ENCODE measurements at regions of chr19 and their contacts with region 1.

Region 1: DNA sequence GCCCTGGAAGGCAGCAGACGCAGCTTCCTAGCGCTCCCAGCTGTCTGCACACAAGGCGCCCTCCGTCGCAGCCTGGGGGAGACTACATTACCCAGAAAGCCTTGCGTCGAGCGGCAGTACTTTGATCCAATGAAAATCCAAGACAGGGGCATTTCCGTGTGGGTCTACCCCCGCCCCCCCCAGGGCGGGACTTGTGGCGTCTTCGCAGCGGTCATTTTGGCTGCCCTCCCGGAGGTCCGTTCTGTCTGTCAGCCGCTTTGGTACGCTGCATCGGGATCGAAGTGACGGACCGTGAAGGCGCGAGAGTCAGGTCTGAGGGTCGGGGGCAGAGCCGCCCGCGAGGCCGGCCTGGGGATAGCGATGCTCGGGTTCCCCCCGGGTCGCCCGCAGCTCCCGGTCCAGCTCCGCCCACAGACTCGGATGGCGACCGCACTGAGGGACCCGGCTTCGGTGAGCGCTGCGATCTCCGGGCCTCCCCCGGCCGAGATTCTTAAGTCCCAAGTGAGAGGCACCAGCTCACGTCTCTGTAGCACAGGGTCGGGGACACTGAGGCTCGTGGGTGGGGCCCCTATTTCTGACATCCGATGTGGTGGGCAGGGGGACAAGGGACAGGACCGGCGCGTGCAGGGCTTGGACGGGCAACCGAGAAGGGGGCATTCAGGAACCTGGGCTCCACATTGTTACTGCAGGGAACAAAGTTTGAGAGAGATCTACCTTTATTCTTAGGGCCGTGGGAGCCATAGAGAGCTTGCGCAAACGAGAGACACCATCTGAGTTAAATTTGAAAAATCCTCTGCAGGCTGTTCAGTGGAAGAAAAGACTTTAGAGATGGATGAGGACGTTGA is at the start of gene ZNF211:
- DNase-seq: peak; percentile 93
- ATAC-seq: peak; percentile 99
- H3K4me3 ChIP-seq: peak within 1 kb of the TSS; percentile 67 to 95 (median 84)
- H3K4me3 Mint-ChIP-seq: peak within 1 kb of the TSS; percentile 92
- H3K27ac ChIP-seq: peak within 1 kb of the TSS; percentile 70 to 80
- H3K27ac Mint-ChIP-seq: peak within 1 kb of the TSS; percentile 88
- H3K4me1 ChIP-seq: peaks cover 11 to 17% of the 10 kb centered on the region in 2 donors
- H3K4me1 Mint-ChIP-seq: peaks cover 22% of the 10 kb centered on the region
- H3K27me3 ChIP-seq: no peaks in the 10 kb centered on the region
- H3K27me3 Mint-ChIP-seq: no peaks in the 10 kb centered on the region
- CTCF ChIP-seq: no peak
- total RNA-seq, gene ZNF211: 53.5 and 53.6 TPM in 2 replicates

Region 2: GRCh38 chr19:57537953-57538547 is 95.2 kb before region 1 on chr19:
- CTCF ChIA-PET with region 1: no interaction called
- POLR2A ChIA-PET with region 1: no interaction called
- intact Hi-C with region 1: no loop called
- DNase-seq: no peak
- ATAC-seq: no peak
- H3K4me3 ChIP-seq: peak overlapping the region in 1 of 5 experiments; percentile 21
- H3K4me3 Mint-ChIP-seq: no peak overlapping the region
- H3K27ac ChIP-seq: no peak overlapping the region
- H3K27ac Mint-ChIP-seq: no peak overlapping the region
- H3K4me1 ChIP-seq: no peaks in the 10 kb centered on the region
- H3K4me1 Mint-ChIP-seq: no peaks in the 10 kb centered on the region
- H3K27me3 ChIP-seq: no peaks in the 10 kb centered on the region
- H3K27me3 Mint-ChIP-seq: no peaks in the 10 kb centered on the region
- CTCF ChIP-seq: no peak

Region 3: GRCh38 chr19:57578487-57579205 is 54.6 kb before region 1 on chr19 and contains the start of gene ZNF416:
- CTCF ChIA-PET with region 1: no interaction called
- POLR2A ChIA-PET with region 1: no interaction called
- intact Hi-C with region 1: loop called (anchors 1 kb)
- DNase-seq: peak; percentile 99
- ATAC-seq: peak; percentile 89
- H3K4me3 ChIP-seq: peak within 1 kb of the TSS; percentile 28 to 90 (median 72)
- H3K4me3 Mint-ChIP-seq: peak within 1 kb of the TSS; percentile 86
- H3K27ac ChIP-seq: peak within 1 kb of the TSS; percentile 46 to 79
- H3K27ac Mint-ChIP-seq: peak within 1 kb of the TSS; percentile 94
- H3K4me1 ChIP-seq: peaks cover 19 to 27% of the 10 kb centered on the region in 2 donors
- H3K4me1 Mint-ChIP-seq: peaks cover 25% of the 10 kb centered on the region
- H3K27me3 ChIP-seq: no peaks in the 10 kb centered on the region
- H3K27me3 Mint-ChIP-seq: no peaks in the 10 kb centered on the region
- CTCF ChIP-seq: no peak
- total RNA-seq, gene ZNF416: 13.0 and 13.9 TPM in 2 replicates

Region 4: DNA sequence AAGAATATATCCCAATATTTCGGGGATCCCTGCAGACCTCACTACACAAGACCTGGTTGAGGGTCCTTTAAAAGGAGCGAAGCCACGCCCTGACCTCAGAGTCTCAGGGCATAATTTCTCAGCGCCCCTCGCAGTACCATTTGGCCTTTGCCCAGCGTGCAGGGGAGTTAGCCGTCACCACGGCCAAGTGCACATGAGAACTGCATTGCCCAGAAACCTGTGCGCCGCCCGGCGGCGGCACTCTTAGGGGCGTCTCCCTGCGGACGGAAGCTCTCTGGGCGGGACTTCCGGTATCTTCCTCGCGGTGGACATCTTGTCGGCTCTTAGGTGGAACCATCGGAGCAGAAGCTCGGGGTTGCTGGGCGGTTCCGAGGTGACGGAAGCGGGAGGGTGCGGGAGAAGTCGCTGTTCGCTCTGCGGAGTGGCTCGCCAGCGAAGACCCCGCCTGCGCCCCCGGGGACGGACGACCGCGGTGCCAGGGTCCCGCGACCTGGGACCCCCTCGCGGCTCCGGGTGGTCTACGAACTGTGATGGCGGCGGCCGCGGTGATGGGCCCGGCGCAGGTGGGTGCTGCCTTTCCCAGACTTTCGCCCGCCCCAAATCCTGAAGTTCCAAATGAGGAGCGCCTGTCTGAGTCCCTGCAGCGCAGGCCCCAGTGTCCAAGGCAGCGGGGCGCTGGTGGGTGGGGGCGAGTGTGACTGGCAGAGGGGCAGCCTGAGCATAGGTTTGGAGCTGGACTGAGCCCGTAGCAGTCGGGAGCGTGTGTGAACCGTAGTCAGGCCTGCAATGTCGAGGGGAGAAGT is 19.1 kb before region 1 on chr19 and contains the start of gene ZNF134:
- CTCF ChIA-PET with region 1: no interaction called
- POLR2A ChIA-PET with region 1: interaction called, 5 read pairs
- intact Hi-C with region 1: loop called (anchors 1 kb)
- DNase-seq: peak; percentile 94
- ATAC-seq: peak; percentile 99
- H3K4me3 ChIP-seq: peak within 1 kb of the TSS; percentile 45 to 97 (median 92)
- H3K4me3 Mint-ChIP-seq: peak within 1 kb of the TSS; percentile 93
- H3K27ac ChIP-seq: peak within 1 kb of the TSS; percentile 42 to 81
- H3K27ac Mint-ChIP-seq: peak within 1 kb of the TSS; percentile 90
- H3K4me1 ChIP-seq: peaks cover 14 to 21% of the 10 kb centered on the region in 2 donors
- H3K4me1 Mint-ChIP-seq: peaks cover 40% of the 10 kb centered on the region
- H3K27me3 ChIP-seq: no peaks in the 10 kb centered on the region
- H3K27me3 Mint-ChIP-seq: no peaks in the 10 kb centered on the region
- CTCF ChIP-seq: peak; percentile 34
- total RNA-seq, gene ZNF134: 38.1 and 38.9 TPM in 2 replicates

Region 5: DNA sequence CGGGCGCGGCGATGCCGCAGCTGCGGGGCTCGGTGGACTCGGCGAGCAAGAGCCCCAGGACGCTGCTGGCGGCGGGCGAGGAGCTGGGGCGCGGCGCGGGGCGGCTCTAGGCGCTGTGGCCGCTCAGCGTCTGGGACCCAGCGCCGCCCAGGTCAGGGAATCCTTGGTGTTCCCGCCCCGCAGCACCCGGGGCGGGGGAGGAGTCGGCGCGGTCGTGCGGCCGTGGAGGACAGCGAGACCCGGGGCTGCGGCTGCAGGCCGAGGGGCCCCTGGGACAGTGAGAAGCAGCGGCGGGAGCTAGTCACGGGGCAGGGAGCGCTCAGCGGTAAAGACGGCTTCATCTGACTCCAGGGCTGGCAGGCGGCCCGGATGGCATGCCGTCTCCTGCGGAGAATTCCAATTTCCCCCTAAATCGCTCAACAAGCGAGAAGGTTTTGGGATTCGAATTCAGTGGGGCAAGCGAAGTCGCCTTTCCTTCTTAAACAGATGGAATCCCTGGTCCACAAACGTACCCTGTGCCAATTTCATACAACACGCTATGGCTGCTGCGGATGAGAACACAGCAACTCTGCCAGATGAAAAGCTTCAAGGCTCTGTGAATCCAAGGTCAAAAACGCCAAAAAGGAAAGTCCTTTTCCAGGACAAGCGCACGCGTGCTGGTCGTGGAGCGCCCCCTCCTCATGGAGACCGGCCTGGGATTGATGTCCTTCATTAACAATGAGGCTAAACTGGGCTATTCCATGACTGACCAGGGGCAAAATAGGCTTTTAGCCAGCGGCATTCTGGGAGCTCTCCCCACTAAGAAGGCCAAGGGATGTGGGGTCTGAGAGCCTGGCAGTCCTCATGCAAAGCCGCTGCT is 31.3 kb after region 1 on chr19:
- CTCF ChIA-PET with region 1: no interaction called
- POLR2A ChIA-PET with region 1: no interaction called
- intact Hi-C with region 1: no loop called
- DNase-seq: peak; percentile 51
- ATAC-seq: peak; percentile 45
- H3K4me3 ChIP-seq: peak overlapping the region in 4 of 5 experiments; percentile 4 to 64 (median 42)
- H3K4me3 Mint-ChIP-seq: peak overlapping the region; percentile 73
- H3K27ac ChIP-seq: no peak overlapping the region
- H3K27ac Mint-ChIP-seq: no peak overlapping the region
- H3K4me1 ChIP-seq: peaks cover 9 to 13% of the 10 kb centered on the region in 2 donors
- H3K4me1 Mint-ChIP-seq: peaks cover 13% of the 10 kb centered on the region
- H3K27me3 ChIP-seq: peaks cover 0 to 51% (median 16%) of the 10 kb centered on the region in 4 experiments
- H3K27me3 Mint-ChIP-seq: peaks cover 32% of the 10 kb centered on the region
- CTCF ChIP-seq: no peak

Region 6: GRCh38 chr19:57819475-57820148 is 186.4 kb after region 1 on chr19:
- CTCF ChIA-PET with region 1: no interaction called
- POLR2A ChIA-PET with region 1: no interaction called
- intact Hi-C with region 1: loop called (anchors 10 kb)
- DNase-seq: peak; percentile 90
- ATAC-seq: peak; percentile 83
- H3K4me3 ChIP-seq: peak overlapping the region; percentile 78 to 92 (median 83)
- H3K4me3 Mint-ChIP-seq: peak overlapping the region; percentile 94
- H3K27ac ChIP-seq: peak overlapping the region; percentile 75 to 88
- H3K27ac Mint-ChIP-seq: peak overlapping the region; percentile 97
- H3K4me1 ChIP-seq: peaks cover 12 to 17% of the 10 kb centered on the region in 2 donors
- H3K4me1 Mint-ChIP-seq: peaks cover 58% of the 10 kb centered on the region
- H3K27me3 ChIP-seq: no peaks in the 10 kb centered on the region
- H3K27me3 Mint-ChIP-seq: no peaks in the 10 kb centered on the region
- CTCF ChIP-seq: no peak

Measured in B cell (primary cell).